Left cardiac atrium (tissue), 4 donors: ENCODE measurements at regions of chr7 and their contacts with region 1.

Region 1: DNA sequence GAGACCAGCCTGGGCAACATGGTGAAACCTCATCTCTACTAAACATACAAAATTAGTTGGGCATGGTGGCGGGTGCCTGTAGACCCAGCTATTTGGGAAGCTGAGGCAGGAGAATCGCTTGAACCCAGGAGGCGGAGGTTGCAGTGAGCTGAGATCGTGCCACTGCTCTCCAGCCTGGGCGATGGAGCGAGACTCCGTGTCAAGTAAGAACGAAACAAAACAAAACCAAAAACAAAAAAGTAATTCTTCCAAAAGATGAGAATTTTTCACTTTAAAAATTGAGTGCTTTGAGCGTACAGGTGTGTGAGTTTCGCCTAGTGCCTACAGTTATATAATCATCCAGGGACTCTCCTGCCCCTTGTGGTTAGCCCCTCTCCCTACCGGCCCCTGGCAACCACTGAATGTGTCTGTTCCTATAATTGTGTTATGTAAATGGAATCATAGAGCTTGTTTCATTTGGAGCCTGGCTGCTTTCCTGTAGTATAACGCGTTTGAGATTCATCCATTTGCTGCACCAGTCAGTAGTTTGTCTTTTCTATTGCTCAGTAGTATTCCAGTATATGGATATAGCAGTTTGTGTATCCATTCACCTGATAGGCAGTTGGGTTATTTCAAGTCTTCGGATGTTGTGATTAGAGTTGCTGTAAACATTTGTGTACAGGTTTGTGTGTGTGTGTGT is 80.0 kb downstream of the RBM33 start:
- DNase-seq: no peak
- ATAC-seq: no peak

Region 2: DNA sequence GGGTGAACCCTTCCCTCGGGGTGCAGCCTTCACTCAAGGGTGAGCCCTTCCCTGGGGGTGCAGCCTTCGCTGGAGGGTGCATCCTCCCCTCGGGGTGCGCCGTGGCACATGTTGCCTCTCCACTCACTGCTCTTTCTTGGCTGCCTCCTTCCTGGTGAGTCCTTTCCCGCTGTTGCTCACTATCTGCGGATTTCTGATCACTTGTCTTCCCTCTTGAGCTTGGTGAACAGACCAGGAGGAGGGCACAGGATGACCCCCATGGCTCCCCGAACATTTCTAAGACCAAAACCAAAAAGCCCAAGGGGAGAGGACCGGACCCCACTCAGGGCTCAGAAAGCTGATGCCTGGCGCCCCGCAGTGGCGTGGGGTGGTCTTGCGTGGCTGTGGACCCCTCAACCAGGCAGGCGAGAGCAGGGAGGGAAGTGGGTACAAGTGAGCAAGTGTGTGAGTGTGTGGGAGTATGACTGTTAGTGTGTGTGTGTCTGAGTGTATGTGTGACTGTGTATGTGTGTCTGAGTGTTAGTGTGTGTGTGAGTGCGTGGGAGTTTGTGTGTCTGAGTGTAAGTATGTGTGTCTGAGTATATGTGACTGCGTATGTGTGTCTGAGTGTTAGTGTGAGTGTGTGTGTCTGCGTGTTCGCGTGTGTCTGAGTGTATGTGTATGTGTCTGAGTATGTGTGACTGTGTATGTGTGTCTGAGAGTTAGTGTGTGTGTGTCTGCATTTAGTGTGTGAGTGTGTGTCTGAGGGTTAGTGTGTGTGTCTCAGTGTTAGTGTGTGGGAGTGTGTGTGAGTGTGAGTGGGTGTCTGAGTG is 460.9 kb before region 1 on chr7:
- intact Hi-C with region 1: no loop called
- DNase-seq: no peak
- ATAC-seq: no peak

Region 3: DNA sequence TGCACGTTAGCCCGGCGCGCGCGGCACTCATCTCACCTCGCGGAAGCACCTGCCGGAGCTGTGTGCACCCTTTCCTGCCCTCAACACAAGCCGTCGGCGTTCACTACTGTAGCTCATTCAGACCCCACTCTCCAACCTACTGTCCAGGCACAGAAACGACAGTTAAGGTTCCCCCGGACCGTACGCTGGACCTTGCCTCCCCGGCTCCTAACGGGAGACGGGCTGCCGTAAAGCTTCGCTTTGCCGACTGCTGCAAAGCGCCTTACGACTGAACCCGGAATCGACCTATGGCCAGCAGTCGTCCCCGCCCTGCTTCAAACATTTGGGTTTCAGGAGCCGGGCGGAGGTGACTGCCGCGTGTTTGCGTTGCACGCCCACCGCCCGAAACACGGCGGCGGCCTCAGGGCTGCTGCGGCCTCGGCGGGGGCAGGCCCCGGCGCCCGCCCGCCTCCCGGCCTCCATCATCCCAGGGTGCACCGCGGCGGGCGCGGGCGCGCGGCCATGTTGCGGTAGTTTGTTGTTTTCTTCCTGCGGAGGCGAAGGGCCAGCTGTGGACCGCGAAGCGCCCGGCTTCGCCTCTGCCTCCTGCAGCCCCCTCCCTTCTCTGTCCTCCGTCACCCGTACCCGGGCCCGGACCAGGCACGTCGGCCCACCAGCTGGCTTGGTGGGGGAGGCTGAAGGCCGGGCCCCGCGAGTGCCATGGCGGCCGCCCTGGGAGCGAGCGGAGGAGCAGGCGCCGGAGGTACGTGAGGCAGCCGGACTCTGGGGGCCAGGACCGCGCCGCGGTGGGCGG is 80.1 kb before region 1 on chr7 and contains the start of gene RBM33:
- intact Hi-C with region 1: loop called in 1 of 2 experiments (anchors 5 kb)
- DNase-seq: peak; percentile 82
- ATAC-seq: peak; percentile 95 to 96
- total RNA-seq, gene RBM33: 34.2 to 41.5 TPM